ENCODE measurements at regions of chr6 and their contacts with region 1.

Region 1: GRCh38 chr6:34610819-34611477 is 54.8 kb upstream of the SPDEF start:
- H3K4me3 ChIP-seq: no peak overlapping the region
- H3K27ac ChIP-seq: no peak overlapping the region
- H3K4me1 ChIP-seq: peaks cover 7% of the 10 kb centered on the region
- CTCF ChIP-seq: no peak

Region 2: DNA sequence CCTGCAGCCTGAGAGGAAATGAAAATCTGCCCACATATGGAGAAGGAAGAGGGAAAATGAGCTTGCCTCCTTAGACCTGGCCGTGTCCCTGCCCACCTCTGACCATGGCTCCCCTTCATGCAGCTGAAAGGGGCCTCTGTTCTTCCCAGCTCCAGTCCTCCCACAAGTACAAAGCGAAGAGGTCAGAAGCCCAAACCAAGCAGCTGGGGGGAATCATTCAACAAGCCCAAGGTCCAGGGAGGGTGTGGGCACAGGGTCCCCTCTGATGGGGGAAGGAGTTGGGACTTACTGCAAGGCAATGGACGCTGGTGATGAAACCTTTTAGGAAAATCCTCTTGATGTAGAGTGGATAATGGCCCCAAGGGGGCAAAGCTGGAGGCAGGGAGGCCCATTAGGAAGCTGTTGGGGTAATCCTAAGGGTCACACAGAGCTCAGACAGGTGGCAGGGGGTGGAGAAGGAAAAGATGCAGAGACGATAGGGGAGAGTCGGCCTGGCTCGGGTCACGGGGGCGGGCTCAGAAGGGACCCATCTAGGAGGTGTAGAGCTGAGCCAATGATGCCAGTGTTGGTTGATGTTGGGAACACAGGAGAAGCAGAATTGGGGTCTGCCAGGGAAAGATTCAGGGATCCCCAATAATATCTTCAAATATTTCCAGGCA is 449.0 kb before region 1 on chr6:
- CTCF ChIA-PET with region 1: interaction called, 22 read pairs
- POLR2A ChIA-PET with region 1: no interaction called
- H3K4me3 ChIP-seq: no peak overlapping the region
- H3K27ac ChIP-seq: no peak overlapping the region
- H3K4me1 ChIP-seq: no peaks in the 10 kb centered on the region
- CTCF ChIP-seq: no peak

Region 3: GRCh38 chr6:34248727-34249551 is 362.0 kb before region 1 on chr6 and contains the start of gene SMIM29:
- CTCF ChIA-PET with region 1: interaction called, 30 read pairs
- POLR2A ChIA-PET with region 1: no interaction called
- H3K4me3 ChIP-seq: peak within 1 kb of the TSS; percentile 79
- H3K27ac ChIP-seq: peak within 1 kb of the TSS; percentile 56; the same call in 1 of the 2 replicates
- H3K4me1 ChIP-seq: peaks cover 3% of the 10 kb centered on the region
- CTCF ChIP-seq: peak; percentile 78

Region 4: DNA sequence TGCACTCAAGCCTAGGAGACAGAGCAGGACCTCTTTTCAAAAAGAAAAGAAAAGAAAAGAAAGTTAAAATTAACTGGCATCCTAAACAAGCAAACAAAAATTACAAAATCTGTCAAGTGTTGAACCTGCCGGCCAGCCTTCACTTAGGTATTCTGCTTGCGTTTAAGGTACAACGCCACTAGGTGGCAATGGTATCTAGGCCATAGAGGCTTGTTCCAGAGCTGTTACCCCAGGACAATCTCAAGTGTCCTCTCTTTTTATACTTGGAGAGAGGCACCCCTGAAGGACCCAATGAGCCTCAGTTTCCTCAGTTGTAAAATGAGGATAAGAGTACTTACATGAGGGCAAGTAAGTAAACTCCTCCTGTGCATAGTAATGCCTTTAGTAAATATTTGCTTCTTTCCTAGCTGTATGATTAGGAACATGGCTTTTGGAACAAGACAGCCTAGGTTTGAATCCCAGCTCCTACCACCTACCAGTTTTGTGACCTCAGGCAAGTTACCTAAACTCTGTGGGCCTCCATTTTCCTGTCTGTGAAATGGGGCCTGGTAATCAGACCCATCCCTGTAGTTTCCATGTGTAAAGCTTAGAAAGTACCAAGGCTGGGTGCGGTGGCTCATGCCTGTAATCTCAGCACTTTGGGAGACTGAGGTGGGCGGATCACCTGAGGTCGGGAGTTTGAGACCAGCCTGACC is 150.9 kb before region 1 on chr6:
- CTCF ChIA-PET with region 1: interaction called, 138 read pairs
- POLR2A ChIA-PET with region 1: no interaction called
- H3K4me3 ChIP-seq: no peak overlapping the region
- H3K27ac ChIP-seq: no peak overlapping the region
- H3K4me1 ChIP-seq: no peaks in the 10 kb centered on the region
- CTCF ChIP-seq: peak; percentile 57

Region 5: GRCh38 chr6:34526992-34527728 is 83.8 kb before region 1 on chr6:
- CTCF ChIA-PET with region 1: interaction called, 46 read pairs
- POLR2A ChIA-PET with region 1: interaction called, 3 read pairs
- H3K4me3 ChIP-seq: peak overlapping the region; percentile 16; the same call in 1 of the 2 replicates
- H3K27ac ChIP-seq: no peak overlapping the region
- H3K4me1 ChIP-seq: no peaks in the 10 kb centered on the region
- CTCF ChIP-seq: peak; percentile 93

Region 6: GRCh38 chr6:34583461-34583860 is 27.5 kb before region 1 on chr6:
- CTCF ChIA-PET with region 1: interaction called, 12 read pairs
- POLR2A ChIA-PET with region 1: no interaction called
- H3K4me3 ChIP-seq: no peak overlapping the region
- H3K27ac ChIP-seq: no peak overlapping the region
- H3K4me1 ChIP-seq: no peaks in the 10 kb centered on the region
- CTCF ChIP-seq: peak; percentile 63

Region 7: GRCh38 chr6:34745277-34746103 is 134.5 kb after region 1 on chr6:
- CTCF ChIA-PET with region 1: no interaction called
- POLR2A ChIA-PET with region 1: no interaction called
- H3K4me3 ChIP-seq: no peak overlapping the region
- H3K27ac ChIP-seq: no peak overlapping the region
- H3K4me1 ChIP-seq: 0 out of 2 replicates have a peak, but pooled peaks cover 3% of the 10 kb centered on the region
- CTCF ChIP-seq: no peak

Region 8: DNA sequence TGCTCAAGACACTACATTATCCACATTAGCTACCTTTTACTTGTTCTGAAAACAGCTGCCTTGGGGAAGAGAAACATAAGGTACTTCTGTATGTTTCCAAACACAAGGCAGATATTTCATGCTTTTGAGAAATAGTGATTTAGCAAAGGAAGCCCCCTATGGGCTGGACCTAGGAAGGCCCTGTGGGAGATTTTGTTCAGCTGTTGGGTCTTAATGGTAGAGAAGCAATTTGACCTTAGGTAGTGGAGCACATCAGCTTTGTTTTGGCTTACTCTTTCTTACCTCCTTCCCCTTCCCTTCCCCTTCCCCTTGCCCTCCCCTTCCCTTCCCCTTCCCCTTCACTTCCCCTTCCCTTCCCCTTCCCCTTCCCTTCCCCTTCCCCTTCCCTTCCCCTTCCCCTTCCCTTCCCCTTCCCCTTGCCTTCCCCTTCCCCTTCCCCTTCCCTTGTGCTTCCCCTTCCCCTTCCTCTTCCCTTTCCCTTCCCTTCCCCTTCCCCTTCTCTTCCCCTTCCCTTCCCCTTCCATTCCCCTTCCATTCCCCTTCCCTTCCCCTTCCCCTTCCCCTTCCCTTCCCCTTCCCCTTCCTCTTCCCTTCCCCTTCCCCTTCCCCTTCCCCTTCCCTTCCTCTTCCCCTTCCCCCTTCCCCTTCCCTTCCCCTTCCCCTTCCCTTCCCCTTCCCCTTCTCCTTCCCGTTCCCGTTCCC is 362.8 kb after region 1 on chr6:
- CTCF ChIA-PET with region 1: no interaction called
- POLR2A ChIA-PET with region 1: no interaction called
- H3K4me3 ChIP-seq: no peak overlapping the region
- H3K27ac ChIP-seq: no peak overlapping the region
- H3K4me1 ChIP-seq: no peaks in the 10 kb centered on the region
- CTCF ChIP-seq: no peak

Measured in HEK293 (cell line).